ENCODE measurements at regions of chr20 and their contacts with region 1.

Region 1: GRCh38 chr20:51512645-51513044 is 29.9 kb downstream of the NFATC2 start:
- DNase-seq: peak in 3 of 5 donors; percentile 35 to 50 (median 35)
- H3K4me3 ChIP-seq: no peak overlapping the region
- H3K4me3 Mint-ChIP-seq: peak overlapping the region; percentile 33 to 71 (median 56)
- H3K27ac ChIP-seq: peak overlapping the region; percentile 31
- H3K27ac Mint-ChIP-seq: peak overlapping the region; percentile 55 to 95 (median 85)
- H3K4me1 ChIP-seq: peaks cover 86% of the 10 kb centered on the region
- H3K4me1 Mint-ChIP-seq: peaks cover 63 to 91% (median 75%) of the 10 kb centered on the region in 4 donors
- H3K27me3 ChIP-seq: no peaks in the 10 kb centered on the region
- H3K27me3 Mint-ChIP-seq: no peaks in the 10 kb centered on the region

Region 2: GRCh38 chr20:51404298-51405060 is 108.2 kb before region 1 on chr20:
- CTCF ChIA-PET with region 1: no interaction called
- POLR2A ChIA-PET with region 1: interaction called, 19 read pairs
- intact Hi-C with region 1: no loop called
- DNase-seq: peak; percentile 86 to 98 (median 90)
- H3K4me3 ChIP-seq: no peak overlapping the region
- H3K4me3 Mint-ChIP-seq: peak overlapping the region in 7 of 8 donors; percentile 43 to 94 (median 78)
- H3K27ac ChIP-seq: peak overlapping the region; percentile 96
- H3K27ac Mint-ChIP-seq: peak overlapping the region; percentile 99 to 100 (median 100)
- H3K4me1 ChIP-seq: peaks cover 97% of the 10 kb centered on the region
- H3K4me1 Mint-ChIP-seq: peaks cover 64 to 92% (median 77%) of the 10 kb centered on the region in 4 donors
- H3K27me3 ChIP-seq: no peaks in the 10 kb centered on the region
- H3K27me3 Mint-ChIP-seq: no peaks in the 10 kb centered on the region

Region 3: DNA sequence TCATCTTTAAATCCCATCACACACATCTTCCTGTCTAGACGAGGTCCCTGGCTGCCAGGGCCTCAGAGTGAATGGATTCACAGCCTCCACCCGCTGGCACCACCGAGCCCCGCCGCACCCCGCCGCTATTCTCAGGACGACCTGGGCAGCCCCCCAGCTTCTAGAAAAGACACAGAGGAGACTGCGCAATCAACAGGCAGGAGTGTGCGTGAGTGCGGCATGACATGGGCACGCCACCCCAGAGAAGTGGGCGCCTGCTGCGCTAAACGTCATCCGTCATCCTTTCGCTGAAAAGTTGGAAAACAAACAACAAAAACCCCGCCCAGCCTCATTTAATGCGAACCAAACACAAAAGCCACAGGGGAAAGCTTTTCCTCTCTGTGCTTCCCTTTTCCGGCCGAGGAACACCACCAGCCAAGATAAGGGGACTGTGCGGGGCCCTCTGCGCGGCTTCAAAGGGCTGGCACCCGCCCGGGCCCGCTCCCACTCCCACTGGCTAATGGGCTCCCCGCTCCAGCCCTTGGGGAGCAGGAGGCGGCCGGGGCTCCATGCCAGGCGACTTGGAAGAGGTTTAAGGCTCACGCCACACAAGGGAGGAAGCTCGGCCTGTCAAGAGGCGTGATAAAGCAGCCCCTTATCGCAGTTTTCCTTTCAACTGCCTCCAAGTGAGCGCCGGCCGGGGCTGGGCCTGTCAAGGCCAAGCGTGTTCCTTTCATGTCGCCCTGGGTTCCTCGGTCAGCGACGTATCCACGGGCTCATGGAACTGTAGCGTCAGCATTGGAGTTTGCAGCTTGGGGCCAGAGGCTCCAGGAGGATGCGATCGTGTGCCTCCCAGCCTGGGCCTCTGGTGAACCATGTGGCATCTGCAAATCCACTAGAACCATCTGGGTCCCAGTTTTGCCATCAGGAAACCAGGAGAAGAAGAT is 20.2 kb before region 1 on chr20:
- CTCF ChIA-PET with region 1: interaction called, 8 read pairs
- POLR2A ChIA-PET with region 1: interaction called, 84 read pairs
- intact Hi-C with region 1: no loop called
- DNase-seq: no peak
- H3K4me3 ChIP-seq: no peak overlapping the region
- H3K4me3 Mint-ChIP-seq: peak overlapping the region in 5 of 8 donors; percentile 31 to 81 (median 35)
- H3K27ac ChIP-seq: peak overlapping the region; percentile 51
- H3K27ac Mint-ChIP-seq: peak overlapping the region in 6 of 7 donors; percentile 70 to 99 (median 81)
- H3K4me1 ChIP-seq: peaks cover 75% of the 10 kb centered on the region
- H3K4me1 Mint-ChIP-seq: peaks cover 66 to 97% (median 85%) of the 10 kb centered on the region in 4 donors
- H3K27me3 ChIP-seq: no peaks in the 10 kb centered on the region
- H3K27me3 Mint-ChIP-seq: no peaks in the 10 kb centered on the region

Region 4: DNA sequence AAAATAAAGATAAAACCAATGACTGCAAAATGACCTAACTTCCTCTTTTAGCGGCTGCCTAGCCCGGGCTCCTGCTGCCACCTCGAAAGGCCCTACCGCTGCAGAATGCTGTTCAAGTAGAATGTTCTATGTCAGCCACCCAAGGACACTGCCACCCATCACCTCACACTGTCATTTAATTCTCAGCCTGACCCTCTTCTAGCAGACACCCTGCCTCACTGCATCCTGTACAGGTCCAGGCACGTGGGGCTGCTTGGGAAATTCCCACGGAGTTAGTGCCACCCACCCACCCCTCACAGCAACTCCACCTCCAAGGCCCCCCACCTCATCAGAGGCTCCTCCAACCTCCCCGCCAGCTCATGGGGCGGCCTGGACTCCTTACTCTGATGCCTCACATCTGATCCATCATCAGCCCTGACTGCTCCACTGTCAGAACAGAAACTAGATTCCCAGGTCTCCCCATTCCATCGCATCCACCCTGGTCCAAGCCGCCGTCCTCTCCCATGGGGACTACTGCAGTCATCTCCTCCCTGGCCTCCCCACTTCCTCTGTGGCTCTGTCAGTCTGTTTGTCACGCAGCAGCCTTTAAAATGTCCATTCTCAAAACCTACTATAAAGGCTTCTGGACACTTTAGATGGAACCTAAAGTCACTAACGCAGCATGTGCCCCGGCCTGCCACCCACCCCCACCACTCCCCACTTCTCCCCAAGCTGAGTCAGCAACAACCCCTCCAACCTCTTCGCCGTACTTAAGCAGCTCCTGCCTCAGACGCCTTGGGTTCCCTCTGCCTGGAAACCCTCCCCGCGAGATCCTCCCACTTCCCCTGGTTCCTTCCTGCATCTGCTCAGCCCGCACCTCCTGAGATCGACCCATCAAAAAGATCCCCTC is 12.8 kb after region 1 on chr20:
- CTCF ChIA-PET with region 1: interaction called, 6 read pairs
- POLR2A ChIA-PET with region 1: interaction called, 44 read pairs
- intact Hi-C with region 1: loop called (anchors 1 kb)
- DNase-seq: peak; percentile 23 to 86 (median 31)
- H3K4me3 ChIP-seq: peak overlapping the region; percentile 17 to 22
- H3K4me3 Mint-ChIP-seq: peak overlapping the region; percentile 77 to 89 (median 86)
- H3K27ac ChIP-seq: peak overlapping the region; percentile 57
- H3K27ac Mint-ChIP-seq: peak overlapping the region; percentile 82 to 97 (median 92)
- H3K4me1 ChIP-seq: peaks cover 63% of the 10 kb centered on the region
- H3K4me1 Mint-ChIP-seq: peaks cover 59 to 87% (median 70%) of the 10 kb centered on the region in 4 donors
- H3K27me3 ChIP-seq: no peaks in the 10 kb centered on the region
- H3K27me3 Mint-ChIP-seq: no peaks in the 10 kb centered on the region

Region 5: DNA sequence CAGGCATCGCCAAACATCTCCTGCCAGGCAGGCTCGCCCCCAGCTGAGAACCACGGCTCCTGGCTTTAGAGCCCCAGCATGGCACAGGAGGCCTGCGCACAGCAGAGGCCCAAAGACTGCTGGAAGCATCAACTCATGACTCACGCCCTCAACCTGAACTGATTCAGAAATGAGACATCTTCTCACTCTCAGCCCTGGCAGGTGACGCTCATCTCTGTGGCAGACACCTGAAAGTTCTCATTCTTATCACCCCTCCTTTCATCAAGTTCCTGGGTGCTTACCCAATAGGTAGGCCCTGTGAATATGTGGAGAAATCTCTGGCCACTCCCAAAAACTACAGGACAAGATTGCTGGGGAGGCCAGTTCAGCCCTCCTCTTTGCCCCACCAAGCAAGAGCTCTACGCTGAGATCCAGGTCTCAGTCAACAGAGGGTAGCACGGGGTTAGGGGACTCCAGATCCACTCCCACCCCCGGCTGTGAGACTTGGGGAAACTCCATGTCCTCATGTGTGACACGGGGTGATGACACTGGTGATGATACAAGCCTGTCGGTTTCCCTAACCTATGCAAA is 18.6 kb after region 1 on chr20:
- CTCF ChIA-PET with region 1: interaction called, 6 read pairs
- POLR2A ChIA-PET with region 1: interaction called, 44 read pairs
- intact Hi-C with region 1: loop called (anchors 1 kb)
- DNase-seq: peak; percentile 41 to 94 (median 49)
- H3K4me3 ChIP-seq: no peak overlapping the region
- H3K4me3 Mint-ChIP-seq: peak overlapping the region; percentile 46 to 97 (median 76)
- H3K27ac ChIP-seq: peak overlapping the region; percentile 80
- H3K27ac Mint-ChIP-seq: peak overlapping the region; percentile 97 to 99 (median 98)
- H3K4me1 ChIP-seq: peaks cover 96% of the 10 kb centered on the region
- H3K4me1 Mint-ChIP-seq: peaks cover 74 to 100% (median 86%) of the 10 kb centered on the region in 4 donors
- H3K27me3 ChIP-seq: no peaks in the 10 kb centered on the region
- H3K27me3 Mint-ChIP-seq: no peaks in the 10 kb centered on the region

Region 6: GRCh38 chr20:52035977-52036376 is 523.3 kb after region 1 on chr20:
- CTCF ChIA-PET with region 1: no interaction called
- POLR2A ChIA-PET with region 1: no interaction called
- intact Hi-C with region 1: no loop called
- DNase-seq: no peak
- H3K4me3 ChIP-seq: no peak overlapping the region
- H3K4me3 Mint-ChIP-seq: no peak overlapping the region
- H3K27ac ChIP-seq: no peak overlapping the region
- H3K27ac Mint-ChIP-seq: no peak overlapping the region
- H3K4me1 ChIP-seq: peaks cover 10% of the 10 kb centered on the region
- H3K4me1 Mint-ChIP-seq: peaks cover 9 to 12% (median 10%) of the 10 kb centered on the region in 4 donors
- H3K27me3 ChIP-seq: no peaks in the 10 kb centered on the region
- H3K27me3 Mint-ChIP-seq: no peaks in the 10 kb centered on the region